Activated CD4-positive, alpha-beta T cell treated with anti-CD3 and anti-CD28 coated beads for 36 hours (primary cell): ENCODE measurements at regions of chr1 and their contacts with region 1.

Region 1: GRCh38 chr1:109564194-109564878 is 15.9 kb downstream of the GNAI3 start:
- DNase-seq: no peak
- ATAC-seq: no peak
- H3K4me3 Mint-ChIP-seq: no peak overlapping the region
- H3K27ac Mint-ChIP-seq: peak overlapping the region; percentile 55
- H3K4me1 Mint-ChIP-seq: peaks cover 67% of the 10 kb centered on the region
- H3K27me3 Mint-ChIP-seq: no peaks in the 10 kb centered on the region

Region 2: DNA sequence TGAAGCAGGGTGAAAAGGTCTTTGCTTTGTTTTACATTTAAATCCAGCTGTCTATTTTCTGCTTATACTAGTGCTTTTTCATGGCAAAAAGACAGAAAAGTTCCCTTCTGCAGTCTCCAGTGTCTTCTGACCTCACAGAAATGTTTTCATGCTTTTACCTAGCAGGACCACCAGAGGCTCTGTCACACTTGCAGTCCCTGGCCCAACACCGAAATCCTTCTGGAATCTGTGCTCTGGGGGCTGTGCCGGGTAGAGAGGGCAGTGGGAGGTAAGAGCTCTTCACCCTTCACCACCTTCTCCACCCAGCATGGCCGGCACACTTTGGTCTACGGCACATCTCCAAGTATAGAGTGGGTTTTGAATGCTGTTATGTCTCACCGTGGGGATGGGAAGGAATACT is 34.3 kb after region 1 on chr1:
- CTCF ChIA-PET with region 1: interaction called, 3 read pairs
- POLR2A ChIA-PET with region 1: no interaction called
- intact Hi-C with region 1: loop called (anchors 5 kb)
- DNase-seq: no peak
- ATAC-seq: no peak
- H3K4me3 Mint-ChIP-seq: no peak overlapping the region
- H3K27ac Mint-ChIP-seq: no peak overlapping the region
- H3K4me1 Mint-ChIP-seq: peaks cover 21% of the 10 kb centered on the region
- H3K27me3 Mint-ChIP-seq: no peaks in the 10 kb centered on the region

Region 3: GRCh38 chr1:109895720-109896504 is 331.6 kb after region 1 on chr1:
- CTCF ChIA-PET with region 1: no interaction called
- POLR2A ChIA-PET with region 1: no interaction called
- intact Hi-C with region 1: no loop called
- DNase-seq: peak; percentile 27
- ATAC-seq: no peak
- H3K4me3 Mint-ChIP-seq: no peak overlapping the region
- H3K27ac Mint-ChIP-seq: peak overlapping the region; percentile 33
- H3K4me1 Mint-ChIP-seq: peaks cover 15% of the 10 kb centered on the region
- H3K27me3 Mint-ChIP-seq: no peaks in the 10 kb centered on the region